Activated naive CD8-positive, alpha-beta T cell treated with anti-CD3 and anti-CD28 coated beads, Interleukin-2, amount 10 ng/mL, durations not matched to agents 7 days and 5 days (primary cell): ENCODE measurements at regions of chr12 and their contacts with region 1.

Region 1: GRCh38 chr12:89040146-89040964 is 311.9 kb downstream of the DUSP6 start:
- DNase-seq: peak; percentile 80
- ATAC-seq: peak; percentile 98
- H3K4me3 Mint-ChIP-seq: peak overlapping the region; percentile 55
- H3K27ac Mint-ChIP-seq: peak overlapping the region; percentile 92
- H3K4me1 Mint-ChIP-seq: peaks cover 63% of the 10 kb centered on the region
- H3K27me3 Mint-ChIP-seq: no peaks in the 10 kb centered on the region

Region 2: GRCh38 chr12:88820012-88820411 is 220.3 kb before region 1 on chr12:
- POLR2A ChIA-PET with region 1: no interaction called
- DNase-seq: no peak
- ATAC-seq: no peak
- H3K4me3 Mint-ChIP-seq: no peak overlapping the region
- H3K27ac Mint-ChIP-seq: no peak overlapping the region
- H3K4me1 Mint-ChIP-seq: no peaks in the 10 kb centered on the region
- H3K27me3 Mint-ChIP-seq: no peaks in the 10 kb centered on the region

Region 3: GRCh38 chr12:89059721-89060541 is 19.6 kb after region 1 on chr12:
- POLR2A ChIA-PET with region 1: no interaction called
- DNase-seq: no peak
- ATAC-seq: no peak
- H3K4me3 Mint-ChIP-seq: no peak overlapping the region
- H3K27ac Mint-ChIP-seq: no peak overlapping the region
- H3K4me1 Mint-ChIP-seq: peaks cover 2% of the 10 kb centered on the region
- H3K27me3 Mint-ChIP-seq: peaks cover 16% of the 10 kb centered on the region

Region 4: GRCh38 chr12:89470741-89471509 is 430.6 kb after region 1 on chr12:
- POLR2A ChIA-PET with region 1: interaction called, 15 read pairs
- DNase-seq: no peak
- ATAC-seq: peak; percentile 45
- H3K4me3 Mint-ChIP-seq: peak overlapping the region; percentile 41
- H3K27ac Mint-ChIP-seq: peak overlapping the region; percentile 50
- H3K4me1 Mint-ChIP-seq: peaks cover 62% of the 10 kb centered on the region
- H3K27me3 Mint-ChIP-seq: no peaks in the 10 kb centered on the region